ENCODE measurements at regions of chr2 and their contacts with region 1.

Region 1: DNA sequence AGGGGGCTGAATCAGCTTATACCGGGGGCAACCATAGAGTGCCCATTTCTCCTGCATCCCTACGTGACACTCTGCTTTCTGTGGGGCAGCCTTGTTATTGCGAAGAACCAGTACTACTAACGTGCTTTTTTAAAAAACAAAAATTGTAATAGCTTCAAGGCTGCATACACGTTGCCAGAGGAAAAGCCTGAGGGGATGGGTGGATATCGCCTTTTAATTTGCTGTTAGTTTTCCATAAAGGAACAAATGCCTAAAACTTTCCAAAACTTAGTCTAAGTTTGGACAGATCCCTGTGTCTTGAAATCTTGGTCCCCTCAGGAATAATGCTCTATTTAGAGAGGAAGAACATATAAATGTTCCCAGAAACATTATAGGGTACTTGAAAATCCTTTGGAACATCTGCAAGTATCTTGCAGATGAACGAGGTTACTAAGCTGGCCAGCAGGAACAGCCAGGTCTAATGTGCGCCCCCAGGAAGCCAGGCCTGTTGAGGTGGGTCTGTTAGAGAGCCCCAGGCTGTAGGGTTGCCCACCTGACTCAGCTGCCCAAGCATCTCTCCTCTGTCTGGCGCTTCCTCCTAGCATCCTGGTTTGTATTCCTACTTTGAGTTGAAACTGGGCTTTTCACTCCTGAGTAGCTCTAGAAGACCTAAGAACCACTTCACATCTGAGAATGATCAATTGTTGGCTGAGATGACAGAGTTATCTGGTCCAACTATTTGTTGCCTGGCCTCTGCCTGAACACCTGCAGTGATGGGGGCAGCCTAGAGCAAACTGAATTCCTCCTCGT is 96.9 kb downstream of the TGOLN2 start:
- DNase-seq: no peak
- ATAC-seq: no peak
- H3K4me3 ChIP-seq: no peak overlapping the region
- H3K27ac ChIP-seq: no peak overlapping the region
- H3K4me1 ChIP-seq: no peaks in the 10 kb centered on the region
- H3K27me3 ChIP-seq: no peaks in the 10 kb centered on the region
- CTCF ChIP-seq: no peak
- POLR2A ChIP-seq: no peak

Region 2: GRCh38 chr2:84846041-84846663 is 384.7 kb before region 1 on chr2:
- intact Hi-C with region 1: no loop called
- DNase-seq: peak in 1 of 4 donors; percentile 16
- ATAC-seq: no peak
- H3K4me3 ChIP-seq: no peak overlapping the region
- H3K27ac ChIP-seq: peak overlapping the region in 1 of 4 donors; percentile 27
- H3K4me1 ChIP-seq: no peaks in the 10 kb centered on the region
- H3K27me3 ChIP-seq: no peaks in the 10 kb centered on the region
- CTCF ChIP-seq: no peak
- POLR2A ChIP-seq: no peak

Region 3: DNA sequence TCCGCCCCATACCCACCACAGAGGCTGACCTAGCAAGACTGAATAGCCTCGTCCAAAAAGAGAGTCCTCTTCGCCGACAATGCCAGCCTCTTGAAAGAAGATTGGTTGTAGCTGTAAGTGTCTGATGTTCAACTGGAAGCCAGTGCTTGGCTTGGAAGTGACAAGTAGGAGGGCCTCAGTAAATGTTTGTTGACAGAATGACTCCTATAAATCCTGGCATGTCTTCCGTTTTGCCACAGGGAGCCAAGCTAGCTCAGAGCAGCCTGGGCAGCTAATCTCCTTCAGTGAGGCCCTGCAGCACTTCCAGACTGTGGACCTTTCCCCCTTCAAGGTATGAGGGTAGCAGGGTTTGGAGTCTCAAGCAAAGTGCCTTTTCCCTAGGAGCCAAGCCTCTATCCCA is 138.6 kb after region 1 on chr2:
- intact Hi-C with region 1: no loop called
- DNase-seq: no peak
- ATAC-seq: no peak
- H3K4me3 ChIP-seq: no peak overlapping the region
- H3K27ac ChIP-seq: no peak overlapping the region
- H3K4me1 ChIP-seq: no peaks in the 10 kb centered on the region
- H3K27me3 ChIP-seq: no peaks in the 10 kb centered on the region
- CTCF ChIP-seq: no peak
- POLR2A ChIP-seq: no peak

Region 4: DNA sequence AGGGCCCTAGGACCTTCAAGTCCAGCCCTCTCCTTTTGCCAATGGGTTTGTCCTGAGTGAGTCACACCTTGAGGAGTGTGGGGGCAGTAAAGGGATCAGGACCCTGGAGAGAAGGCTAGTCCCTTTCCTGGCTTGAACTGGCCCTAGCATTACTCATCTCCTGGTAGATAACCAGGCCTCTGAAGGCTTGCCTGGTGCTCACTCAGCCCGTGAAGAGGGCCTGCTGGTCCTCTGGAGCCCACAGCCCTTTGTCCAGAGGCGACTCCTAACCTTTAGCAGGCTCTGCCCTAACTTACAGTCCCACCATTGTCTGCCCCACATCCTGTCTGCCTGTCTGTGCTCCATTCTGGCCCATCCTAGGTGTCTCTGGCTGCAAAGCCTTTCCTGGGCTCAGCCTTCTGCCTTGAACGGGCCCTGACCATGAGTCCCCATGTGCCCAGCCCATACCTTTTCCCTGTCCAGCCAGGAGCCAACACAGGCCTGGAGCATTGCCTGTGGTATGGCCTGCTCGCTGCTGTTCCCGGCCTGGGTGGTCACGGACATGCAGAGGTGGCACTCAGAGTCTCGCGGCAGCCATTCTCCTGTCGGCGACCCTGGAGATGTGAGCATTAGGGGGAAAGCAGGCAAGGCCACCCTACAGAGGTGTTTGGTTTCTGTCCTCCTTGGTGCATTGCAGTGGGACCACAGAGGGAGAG is 432.2 kb after region 1 on chr2:
- intact Hi-C with region 1: loop called (anchors 10 kb)
- DNase-seq: peak in 2 of 4 donors; percentile 52 to 62
- ATAC-seq: peak; percentile 54
- H3K4me3 ChIP-seq: no peak overlapping the region
- H3K27ac ChIP-seq: peak overlapping the region in 1 of 4 donors; percentile 40
- H3K4me1 ChIP-seq: no peaks in the 10 kb centered on the region
- H3K27me3 ChIP-seq: no peaks in the 10 kb centered on the region
- CTCF ChIP-seq: no peak
- POLR2A ChIP-seq: no peak

Measured in body of pancreas (tissue), 4 donors.